ENCODE measurements at regions of chr6 and their contacts with region 1.

Region 1: GRCh38 chr6:27809939-27810767 is 102.0 kb downstream of the OR2B2 start:
- DNase-seq: peak; percentile 83
- H3K4me3 Mint-ChIP-seq: peak overlapping the region; percentile 85
- H3K27ac Mint-ChIP-seq: peak overlapping the region; percentile 99
- H3K4me1 Mint-ChIP-seq: peaks cover 62% of the 10 kb centered on the region
- H3K27me3 Mint-ChIP-seq: no peaks in the 10 kb centered on the region

Region 2: DNA sequence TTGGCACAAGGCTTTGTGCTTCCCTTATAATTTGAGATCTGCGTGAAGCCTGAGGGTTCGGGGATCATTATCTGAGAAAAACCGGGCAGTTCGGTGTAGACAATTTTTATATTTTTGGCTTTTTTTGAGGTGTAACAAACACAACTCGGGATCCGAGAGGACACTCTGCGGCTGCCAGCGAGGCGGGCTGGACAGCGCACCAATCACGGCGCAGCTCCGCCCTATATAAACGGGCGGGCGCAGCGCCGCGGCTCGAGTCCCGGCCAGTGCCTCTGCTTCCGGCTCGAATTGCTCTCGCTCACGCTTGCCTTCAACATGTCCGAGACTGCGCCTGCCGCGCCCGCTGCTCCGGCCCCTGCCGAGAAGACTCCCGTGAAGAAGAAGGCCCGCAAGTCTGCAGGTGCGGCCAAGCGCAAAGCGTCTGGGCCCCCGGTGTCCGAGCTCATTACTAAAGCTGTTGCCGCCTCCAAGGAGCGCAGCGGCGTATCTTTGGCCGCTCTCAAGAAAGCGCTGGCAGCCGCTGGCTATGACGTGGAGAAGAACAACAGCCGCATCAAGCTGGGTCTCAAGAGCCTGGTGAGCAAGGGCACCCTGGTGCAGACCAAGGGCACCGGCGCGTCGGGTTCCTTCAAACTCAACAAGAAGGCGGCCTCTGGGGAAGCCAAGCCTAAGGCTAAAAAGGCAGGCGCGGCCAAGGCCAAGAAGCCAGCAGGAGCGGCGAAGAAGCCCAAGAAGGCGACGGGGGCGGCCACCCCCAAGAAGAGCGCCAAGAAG is 1653.9 kb before region 1 on chr6:
- CTCF ChIA-PET with region 1: no interaction called
- POLR2A ChIA-PET with region 1: interaction called, 67 read pairs
- DNase-seq: peak; percentile 91
- H3K4me3 Mint-ChIP-seq: peak overlapping the region; percentile 95
- H3K27ac Mint-ChIP-seq: peak overlapping the region; percentile 98
- H3K4me1 Mint-ChIP-seq: peaks cover 45% of the 10 kb centered on the region
- H3K27me3 Mint-ChIP-seq: no peaks in the 10 kb centered on the region

Region 3: DNA sequence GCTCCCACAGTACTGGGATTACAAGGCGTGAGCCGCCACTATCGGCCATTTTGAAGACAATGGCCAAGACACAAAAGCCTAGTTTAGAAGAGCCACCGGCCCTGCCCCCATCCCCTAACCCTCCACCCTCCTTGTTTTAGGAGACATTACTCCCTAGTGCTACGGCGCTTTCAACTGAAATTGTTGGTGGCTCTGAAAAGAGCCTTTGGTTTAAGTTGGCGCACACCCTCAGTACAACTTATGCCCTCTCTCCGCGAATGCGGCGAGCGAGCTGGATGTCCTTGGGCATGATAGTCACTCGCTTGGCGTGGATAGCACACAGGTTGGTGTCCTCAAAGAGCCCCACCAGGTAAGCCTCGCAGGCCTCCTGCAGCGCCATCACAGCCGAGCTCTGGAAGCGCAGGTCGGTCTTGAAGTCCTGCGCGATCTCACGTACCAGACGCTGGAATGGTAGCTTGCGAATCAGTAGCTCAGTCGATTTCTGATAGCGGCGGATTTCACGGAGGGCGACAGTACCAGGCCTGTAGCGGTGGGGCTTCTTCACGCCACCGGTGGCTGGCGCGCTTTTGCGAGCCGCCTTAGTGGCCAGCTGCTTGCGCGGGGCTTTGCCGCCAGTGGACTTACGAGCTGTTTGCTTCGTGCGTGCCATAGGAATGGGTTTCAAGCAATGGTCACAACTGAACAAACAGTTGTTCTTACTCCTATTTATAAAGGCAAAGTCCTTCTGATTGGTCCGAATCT is 1560.0 kb before region 1 on chr6:
- CTCF ChIA-PET with region 1: no interaction called
- POLR2A ChIA-PET with region 1: interaction called, 25 read pairs
- DNase-seq: peak; percentile 84
- H3K4me3 Mint-ChIP-seq: peak overlapping the region; percentile 90
- H3K27ac Mint-ChIP-seq: peak overlapping the region; percentile 93
- H3K4me1 Mint-ChIP-seq: peaks cover 42% of the 10 kb centered on the region
- H3K27me3 Mint-ChIP-seq: no peaks in the 10 kb centered on the region

Region 4: DNA sequence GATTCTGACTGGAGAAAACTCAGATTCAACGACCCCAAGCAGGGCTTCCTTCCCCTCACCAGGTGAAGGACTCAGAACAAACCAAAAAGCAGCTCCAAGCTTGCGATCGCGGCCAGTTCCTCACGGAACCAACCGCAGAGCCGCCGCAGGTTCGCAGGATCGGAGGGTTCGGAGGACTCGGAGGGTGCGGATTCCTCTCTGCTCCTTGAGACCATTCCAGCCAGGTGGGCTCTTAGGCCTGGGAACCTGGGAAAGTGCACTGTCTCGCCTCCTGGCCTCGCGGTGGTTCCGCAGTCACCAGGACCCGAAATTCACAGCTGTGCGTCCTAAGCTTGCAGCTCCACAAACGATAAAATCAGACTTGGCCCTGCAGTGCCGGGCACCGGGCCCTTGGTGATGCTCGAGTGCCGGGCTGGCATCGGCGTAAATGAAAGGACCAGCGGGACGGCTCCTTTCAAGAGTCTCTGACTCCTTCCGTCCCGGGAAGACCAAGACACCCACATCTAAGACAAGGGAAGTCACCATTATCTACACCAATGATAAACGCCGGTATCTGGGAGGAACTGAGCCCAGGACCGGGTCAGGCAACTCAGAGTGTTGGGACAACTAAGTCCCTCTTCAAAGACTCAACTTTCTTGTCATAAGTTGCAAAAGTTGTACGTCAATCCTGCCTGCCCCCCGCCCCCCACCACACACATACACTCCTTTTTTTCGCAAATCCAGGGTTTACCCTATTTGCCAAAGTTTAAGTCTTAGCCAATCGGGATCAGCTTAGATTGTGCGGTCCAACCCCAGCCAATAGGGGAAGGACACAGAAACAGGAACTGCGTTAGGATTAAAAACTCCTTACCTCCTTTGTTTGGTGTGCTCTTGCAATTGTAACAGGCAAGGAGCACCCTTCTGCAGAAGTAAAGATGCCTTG is 632.4 kb before region 1 on chr6:
- CTCF ChIA-PET with region 1: interaction called, 10 read pairs
- POLR2A ChIA-PET with region 1: interaction called, 10 read pairs
- DNase-seq: peak; percentile 80
- H3K4me3 Mint-ChIP-seq: peak overlapping the region; percentile 92
- H3K27ac Mint-ChIP-seq: peak overlapping the region; percentile 88
- H3K4me1 Mint-ChIP-seq: peaks cover 20% of the 10 kb centered on the region
- H3K27me3 Mint-ChIP-seq: peaks cover 21% of the 10 kb centered on the region

Region 5: GRCh38 chr6:27531772-27532459 is 278.2 kb before region 1 on chr6:
- CTCF ChIA-PET with region 1: no interaction called
- POLR2A ChIA-PET with region 1: no interaction called
- DNase-seq: no peak
- H3K4me3 Mint-ChIP-seq: no peak overlapping the region
- H3K27ac Mint-ChIP-seq: no peak overlapping the region
- H3K4me1 Mint-ChIP-seq: no peaks in the 10 kb centered on the region
- H3K27me3 Mint-ChIP-seq: peaks cover 39% of the 10 kb centered on the region

Region 6: DNA sequence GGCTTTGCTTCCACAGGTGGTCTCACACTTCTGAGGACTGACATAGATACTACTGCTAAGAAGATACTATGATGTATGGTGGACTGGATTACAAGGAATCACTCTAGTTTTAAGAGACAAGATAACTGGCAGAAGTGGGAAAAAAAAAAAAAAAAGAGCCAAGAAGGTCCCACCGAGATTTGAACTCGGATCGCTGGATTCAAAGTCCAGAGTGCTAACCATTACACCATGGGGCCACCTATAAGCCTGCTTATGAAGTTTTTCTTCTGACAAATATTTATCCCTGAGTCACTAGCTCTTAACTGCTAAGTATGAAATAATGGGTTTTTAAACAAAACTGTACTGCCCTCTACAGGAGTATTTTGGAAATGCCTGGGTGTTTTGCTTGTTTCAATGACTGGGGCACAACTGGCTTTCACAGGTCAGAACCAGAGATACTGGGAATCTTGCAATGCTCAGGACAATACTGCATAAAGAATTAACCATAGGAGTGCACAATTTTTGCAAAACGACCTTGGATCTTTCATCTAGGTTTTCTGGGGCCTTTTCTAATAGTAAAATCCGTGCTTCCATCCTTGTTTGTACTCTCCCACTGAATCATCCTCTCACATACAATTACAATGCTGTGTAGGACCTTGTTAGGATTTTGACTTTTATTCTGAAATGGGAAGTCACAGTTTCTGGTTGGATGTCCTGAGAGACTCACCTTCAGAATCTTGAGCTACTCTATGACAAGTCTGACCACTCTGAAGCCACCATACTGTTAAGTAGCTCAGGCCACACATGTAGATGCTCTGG is 14.3 kb before region 1 on chr6:
- CTCF ChIA-PET with region 1: interaction called, 24 read pairs
- POLR2A ChIA-PET with region 1: no interaction called
- DNase-seq: peak; percentile 40
- H3K4me3 Mint-ChIP-seq: no peak overlapping the region
- H3K27ac Mint-ChIP-seq: no peak overlapping the region
- H3K4me1 Mint-ChIP-seq: peaks cover 51% of the 10 kb centered on the region
- H3K27me3 Mint-ChIP-seq: peaks cover 16% of the 10 kb centered on the region

Region 7: DNA sequence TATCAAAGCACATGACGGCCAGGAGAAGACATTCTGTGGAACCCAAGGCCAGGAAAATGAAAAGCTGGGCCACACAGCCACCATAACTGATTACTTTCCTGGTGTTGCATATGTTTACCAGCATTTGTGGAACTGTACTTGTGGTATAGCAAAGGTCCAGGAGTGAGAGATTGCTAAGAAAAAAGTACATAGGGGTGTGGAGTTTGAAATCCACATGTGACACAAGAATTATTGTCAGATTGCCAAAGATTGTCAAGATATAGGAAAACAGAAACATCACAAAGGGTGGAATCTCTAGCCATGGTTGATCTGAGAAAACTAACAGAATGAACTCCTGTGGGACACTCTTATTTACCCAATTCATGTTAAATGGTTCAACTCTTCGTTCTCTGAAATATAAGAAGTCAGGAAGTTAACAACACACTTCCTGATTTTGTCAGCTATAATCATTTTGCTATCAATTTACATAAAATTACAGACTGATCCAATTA is 101.8 kb after region 1 on chr6 and contains the start of gene OR2B2:
- CTCF ChIA-PET with region 1: no interaction called
- POLR2A ChIA-PET with region 1: no interaction called
- DNase-seq: no peak
- H3K4me3 Mint-ChIP-seq: no peak within 1 kb of the TSS
- H3K27ac Mint-ChIP-seq: no peak within 1 kb of the TSS
- H3K4me1 Mint-ChIP-seq: no peaks in the 10 kb centered on the region
- H3K27me3 Mint-ChIP-seq: peaks cover 32% of the 10 kb centered on the region
- total RNA-seq, gene OR2B2: not detected

Region 8: GRCh38 chr6:28011722-28012121 is 201.6 kb after region 1 on chr6:
- CTCF ChIA-PET with region 1: no interaction called
- POLR2A ChIA-PET with region 1: no interaction called
- DNase-seq: no peak
- H3K4me3 Mint-ChIP-seq: no peak overlapping the region
- H3K27ac Mint-ChIP-seq: no peak overlapping the region
- H3K4me1 Mint-ChIP-seq: peaks cover 3% of the 10 kb centered on the region
- H3K27me3 Mint-ChIP-seq: peaks cover 12% of the 10 kb centered on the region

Region 9: GRCh38 chr6:28923318-28924102 is 1113.4 kb after region 1 on chr6 and contains the start of gene TRIM27:
- CTCF ChIA-PET with region 1: no interaction called
- POLR2A ChIA-PET with region 1: interaction called, 17 read pairs
- DNase-seq: peak; percentile 84
- H3K4me3 Mint-ChIP-seq: peak within 1 kb of the TSS; percentile 77
- H3K27ac Mint-ChIP-seq: peak within 1 kb of the TSS; percentile 94
- H3K4me1 Mint-ChIP-seq: peaks cover 39% of the 10 kb centered on the region
- H3K27me3 Mint-ChIP-seq: no peaks in the 10 kb centered on the region
- total RNA-seq, gene TRIM27: 56.8 to 58.0 TPM